HCT116 (cell line): ENCODE measurements at regions of chr4 and their contacts with region 1.

Region 1: GRCh38 chr4:151015459-151016347 is 619 bp upstream of the LRBA start:
- DNase-seq: peak; percentile 77
- ATAC-seq: peak; percentile 78
- H3K4me3 ChIP-seq: peak overlapping the region; percentile 80 to 85
- H3K27ac ChIP-seq: peak overlapping the region; percentile 98
- H3K4me1 ChIP-seq: peaks cover 22 to 35% of the 10 kb centered on the region in 2 experiments
- H3K27me3 ChIP-seq: no peaks in the 10 kb centered on the region
- CTCF ChIP-seq: no peak
- POLR2A ChIP-seq: peak; percentile 93
- RAD21 ChIP-seq: no peak

Region 2: DNA sequence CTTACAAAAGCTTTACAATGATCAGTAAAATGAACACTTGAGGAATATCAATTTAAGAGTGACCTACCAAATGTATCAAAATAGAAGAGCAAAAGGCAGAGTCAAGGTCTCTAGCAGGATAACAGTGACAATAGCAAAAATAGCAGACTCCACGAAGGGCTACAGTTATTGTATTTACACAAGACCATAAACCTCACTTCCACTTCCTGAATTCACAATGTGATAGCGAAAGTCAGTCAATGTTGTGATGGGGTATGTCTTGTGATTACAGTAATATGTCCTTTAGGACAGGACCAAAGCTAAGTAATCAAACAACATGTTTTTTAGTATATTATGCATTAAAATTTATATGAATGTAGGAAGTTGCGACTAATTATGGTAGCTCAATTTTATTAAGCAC is 1339.6 kb before region 1 on chr4:
- CTCF ChIA-PET with region 1: no interaction called
- POLR2A ChIA-PET with region 1: no interaction called
- RAD21 ChIA-PET with region 1: no interaction called
- intact Hi-C with region 1: no loop called
- DNase-seq: no peak
- ATAC-seq: no peak
- H3K4me3 ChIP-seq: no peak overlapping the region
- H3K27ac ChIP-seq: no peak overlapping the region
- H3K4me1 ChIP-seq: no peaks in the 10 kb centered on the region
- H3K27me3 ChIP-seq: no peaks in the 10 kb centered on the region
- CTCF ChIP-seq: no peak
- POLR2A ChIP-seq: no peak
- RAD21 ChIP-seq: no peak

Region 3: DNA sequence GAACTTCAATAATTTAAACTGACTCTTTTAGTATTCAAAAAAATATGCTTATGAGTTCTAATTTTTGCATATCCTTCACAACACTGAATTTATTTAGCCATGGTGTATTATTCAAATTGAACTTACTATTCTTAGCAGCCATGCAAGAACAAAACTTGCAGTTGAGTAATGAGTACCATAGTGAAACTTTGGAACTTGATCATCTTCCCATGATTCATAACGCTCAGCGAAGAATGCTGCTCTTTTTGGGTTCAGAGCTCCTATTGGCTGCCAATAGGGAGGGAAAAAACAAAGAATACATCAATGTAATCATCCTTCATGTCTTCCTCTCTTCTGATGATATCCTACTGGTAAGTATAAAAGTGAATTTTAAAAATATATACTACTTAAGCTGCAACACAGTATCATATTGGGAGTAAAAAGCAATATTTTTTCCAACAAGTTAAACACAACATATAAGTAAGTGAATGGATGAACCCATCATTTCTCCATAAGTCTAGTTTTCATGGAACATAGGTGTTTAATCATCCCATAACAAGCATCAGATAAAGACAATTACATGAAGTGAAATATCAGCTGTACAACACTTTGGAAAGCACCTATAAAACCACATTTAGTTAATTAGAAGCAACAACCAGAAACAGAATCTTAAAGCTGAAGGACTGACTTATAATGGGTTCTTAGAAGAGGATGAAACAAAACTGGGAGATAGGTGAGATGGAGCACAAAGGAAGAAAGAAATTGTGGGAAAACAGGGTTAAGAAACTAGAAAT is 578.9 kb before region 1 on chr4:
- CTCF ChIA-PET with region 1: no interaction called
- POLR2A ChIA-PET with region 1: no interaction called
- RAD21 ChIA-PET with region 1: no interaction called
- intact Hi-C with region 1: no loop called
- DNase-seq: no peak
- ATAC-seq: no peak
- H3K4me3 ChIP-seq: no peak overlapping the region
- H3K27ac ChIP-seq: no peak overlapping the region
- H3K4me1 ChIP-seq: no peaks in the 10 kb centered on the region
- H3K27me3 ChIP-seq: no peaks in the 10 kb centered on the region
- CTCF ChIP-seq: no peak
- POLR2A ChIP-seq: no peak
- RAD21 ChIP-seq: no peak

Region 4: DNA sequence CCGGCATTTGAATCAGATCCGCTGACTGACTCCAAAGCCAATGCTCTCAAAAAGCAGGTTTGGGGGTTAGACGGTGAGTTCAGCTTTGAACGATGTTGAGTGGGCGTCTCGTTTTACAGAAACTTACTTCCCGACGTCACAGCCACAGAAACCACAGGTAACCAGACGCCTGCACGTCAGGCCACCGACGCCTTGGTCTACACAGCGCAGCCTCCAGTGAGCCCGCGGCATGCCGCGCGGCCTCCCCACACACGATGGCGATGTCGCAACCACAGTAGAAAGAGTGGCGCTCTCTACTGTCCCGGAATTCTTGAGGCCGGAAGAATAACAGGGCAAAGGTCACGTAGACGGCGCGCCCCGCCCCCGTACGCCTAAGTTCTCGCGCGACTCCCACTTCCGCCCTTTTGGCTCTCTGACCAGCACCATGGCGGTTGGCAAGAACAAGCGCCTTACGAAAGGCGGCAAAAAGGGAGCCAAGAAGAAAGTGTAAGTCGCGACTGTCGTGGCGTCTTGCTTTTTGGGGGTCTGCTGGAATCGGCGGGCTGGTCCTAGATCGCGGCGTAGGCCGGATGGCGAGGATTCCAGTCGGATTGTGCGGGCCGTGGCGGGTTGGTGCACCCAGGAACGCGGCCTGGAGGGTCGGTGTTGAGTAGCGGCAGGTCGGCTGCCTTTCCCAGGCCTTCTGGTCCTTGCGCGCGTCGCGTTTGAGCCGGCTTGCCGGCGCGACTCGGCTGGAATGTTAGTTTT is 83.7 kb after region 1 on chr4 and contains the start of gene RPS3A:
- CTCF ChIA-PET with region 1: no interaction called
- POLR2A ChIA-PET with region 1: no interaction called
- RAD21 ChIA-PET with region 1: no interaction called
- intact Hi-C with region 1: loop called (anchors 1 kb)
- DNase-seq: peak; percentile 99
- ATAC-seq: peak; percentile 95
- H3K4me3 ChIP-seq: peak within 1 kb of the TSS; percentile 69 to 95
- H3K27ac ChIP-seq: peak within 1 kb of the TSS; percentile 92
- H3K4me1 ChIP-seq: peaks cover 3 to 22% of the 10 kb centered on the region in 2 experiments; a peak in 3 of 4 replicates
- H3K27me3 ChIP-seq: no peaks in the 10 kb centered on the region
- CTCF ChIP-seq: peak; percentile 69 to 80 (median 80)
- POLR2A ChIP-seq: peak; percentile 82
- RAD21 ChIP-seq: peak; percentile 24; the same call in 1 of the 2 replicates
- total RNA-seq, gene RPS3A: 2,446 TPM